PC-3 (cell line): ENCODE measurements at regions of chr20 and their contacts with region 1.

Region 1: DNA sequence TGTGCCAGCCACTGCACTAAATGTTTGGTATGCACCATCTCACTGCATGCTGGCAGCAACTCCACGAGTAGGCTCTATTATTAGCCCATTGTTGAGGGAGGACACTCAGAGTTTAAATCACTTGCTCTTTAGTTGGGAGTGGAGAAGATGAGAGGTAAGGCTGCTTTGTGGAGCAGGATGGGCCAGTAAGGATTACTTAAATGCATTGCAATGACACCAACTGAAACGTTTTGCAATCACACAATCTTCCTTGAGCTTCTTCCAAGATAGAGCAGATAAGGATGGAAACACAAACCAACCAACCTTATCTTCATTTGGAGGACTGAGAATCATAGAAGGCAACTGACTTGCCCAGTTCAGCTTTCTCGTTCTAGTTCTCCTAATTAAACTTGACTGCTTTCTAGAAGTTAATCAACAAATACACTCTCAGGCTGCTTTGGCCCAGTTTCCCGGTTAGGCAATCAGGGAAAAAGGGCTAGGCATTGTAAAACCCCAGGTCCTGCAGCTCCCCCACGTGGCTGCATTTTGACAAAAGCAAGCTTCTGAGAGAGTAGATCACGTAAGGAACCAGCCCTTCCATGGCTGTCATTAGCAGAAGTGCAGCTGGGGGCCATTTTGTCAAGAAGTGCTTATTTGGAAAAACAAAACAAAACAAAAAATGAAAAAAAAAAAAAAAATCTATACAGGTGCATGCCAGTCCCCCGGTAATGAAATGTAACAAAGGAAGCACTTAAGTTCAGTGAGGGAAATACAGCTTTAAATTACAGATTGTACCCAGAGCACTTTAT is 130.6 kb downstream of the BCAS1 start:
- DNase-seq: peak; percentile 100
- ATAC-seq: peak; percentile 84
- H3K4me3 ChIP-seq: no peak overlapping the region
- H3K27ac ChIP-seq: peak overlapping the region; percentile 70
- H3K4me1 ChIP-seq: peaks cover 43% of the 10 kb centered on the region
- H3K27me3 ChIP-seq: no peaks in the 10 kb centered on the region
- CTCF ChIP-seq: peak; percentile 99

Region 2: DNA sequence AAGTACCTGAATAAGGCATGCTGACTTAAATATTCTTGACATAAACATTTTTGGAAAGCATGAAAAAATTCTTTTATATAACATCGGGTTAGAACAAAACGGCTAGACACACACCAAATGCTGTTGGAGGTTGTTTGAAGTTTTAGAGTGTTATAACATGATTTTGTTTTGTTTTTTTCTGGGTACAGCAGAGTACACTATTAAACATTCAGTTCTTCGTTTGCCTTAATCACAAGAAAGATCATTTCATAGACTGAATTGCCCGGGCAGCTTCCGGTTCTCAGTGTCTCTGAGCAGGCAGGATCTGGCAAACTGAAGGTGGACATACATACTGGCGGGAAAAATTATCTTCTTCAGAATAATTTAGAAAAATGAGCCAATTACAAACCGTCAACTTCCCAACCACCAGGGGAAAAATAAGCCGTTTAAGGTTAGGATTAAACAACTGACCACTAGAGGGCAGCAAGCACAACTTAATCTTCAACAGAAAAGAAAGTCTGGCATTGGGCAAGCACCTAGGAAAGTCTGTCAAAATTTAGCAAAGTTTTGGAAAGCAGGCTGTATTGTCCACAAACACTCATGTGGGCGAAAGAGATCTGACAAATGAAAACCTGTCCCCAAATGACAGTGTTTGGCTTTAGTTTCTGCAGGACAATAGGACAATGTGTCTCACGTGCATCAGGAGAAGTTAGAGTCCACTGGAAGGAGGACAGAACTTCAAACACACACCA is 361.1 kb before region 1 on chr20:
- CTCF ChIA-PET with region 1: interaction called, 5 read pairs
- POLR2A ChIA-PET with region 1: interaction called, 4 read pairs
- intact Hi-C with region 1: loop called (anchors 1 kb)
- DNase-seq: peak; percentile 100
- ATAC-seq: peak; percentile 12
- H3K4me3 ChIP-seq: peak overlapping the region; percentile 75
- H3K27ac ChIP-seq: peak overlapping the region; percentile 88
- H3K4me1 ChIP-seq: peaks cover 59% of the 10 kb centered on the region
- H3K27me3 ChIP-seq: no peaks in the 10 kb centered on the region
- CTCF ChIP-seq: peak; percentile 99

Region 3: GRCh38 chr20:53643031-53643832 is 296.5 kb before region 1 on chr20:
- CTCF ChIA-PET with region 1: interaction called, 3 read pairs
- POLR2A ChIA-PET with region 1: no interaction called
- intact Hi-C with region 1: loop called (anchors 2 kb)
- DNase-seq: peak; percentile 94
- ATAC-seq: peak; percentile 92
- H3K4me3 ChIP-seq: peak overlapping the region; percentile 51
- H3K27ac ChIP-seq: peak overlapping the region; percentile 80
- H3K4me1 ChIP-seq: peaks cover 32% of the 10 kb centered on the region
- H3K27me3 ChIP-seq: no peaks in the 10 kb centered on the region
- CTCF ChIP-seq: no peak

Region 4: GRCh38 chr20:53869466-53870258 is 70.1 kb before region 1 on chr20:
- CTCF ChIA-PET with region 1: interaction called, 4 read pairs
- POLR2A ChIA-PET with region 1: no interaction called
- intact Hi-C with region 1: loop called (anchors 2 kb)
- DNase-seq: peak; percentile 98
- ATAC-seq: peak; percentile 71
- H3K4me3 ChIP-seq: peak overlapping the region; percentile 3; the same call in 1 of the 2 replicates
- H3K27ac ChIP-seq: peak overlapping the region; percentile 87
- H3K4me1 ChIP-seq: peaks cover 73% of the 10 kb centered on the region
- H3K27me3 ChIP-seq: no peaks in the 10 kb centered on the region
- CTCF ChIP-seq: peak; percentile 99

Region 5: DNA sequence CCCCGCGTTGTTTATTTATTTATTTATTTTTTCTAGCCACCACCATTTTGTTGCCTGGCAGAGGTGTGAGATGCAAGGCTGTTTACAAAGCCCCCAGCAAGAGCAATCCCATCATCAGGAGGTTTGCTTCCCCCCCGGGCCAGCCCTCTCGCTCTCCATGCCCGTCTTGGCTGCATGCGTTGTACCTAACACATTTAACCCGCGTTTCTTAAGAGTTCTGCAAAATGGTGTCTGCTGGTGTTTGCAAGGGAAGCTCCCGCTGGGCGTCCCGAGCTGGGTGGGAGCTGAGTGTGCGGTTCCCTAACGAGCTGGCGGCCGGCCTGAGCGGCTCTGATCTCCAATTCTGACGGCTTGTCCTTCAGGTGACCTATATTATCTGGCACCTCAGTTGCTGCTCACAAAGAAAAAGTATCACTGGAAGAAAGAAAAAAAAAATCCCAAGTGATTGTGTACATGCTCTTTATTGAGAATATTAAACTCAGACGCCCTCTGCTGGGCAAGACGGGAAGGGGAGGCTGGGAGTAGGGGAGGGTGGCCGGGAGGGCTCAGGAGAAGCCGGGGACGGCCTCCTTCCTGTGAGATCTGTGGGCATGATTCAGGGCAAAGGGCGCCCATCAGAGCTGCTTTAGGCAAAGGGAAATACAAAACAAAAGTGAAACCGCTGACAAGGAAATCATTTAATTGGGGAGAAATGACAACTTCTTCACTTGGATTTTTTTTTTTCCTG is 24.2 kb before region 1 on chr20:
- CTCF ChIA-PET with region 1: interaction called, 17 read pairs
- POLR2A ChIA-PET with region 1: interaction called, 3 read pairs
- intact Hi-C with region 1: loop called (anchors 1 kb)
- DNase-seq: peak; percentile 100
- ATAC-seq: peak; percentile 88
- H3K4me3 ChIP-seq: peak overlapping the region; percentile 72
- H3K27ac ChIP-seq: peak overlapping the region; percentile 84
- H3K4me1 ChIP-seq: peaks cover 48% of the 10 kb centered on the region
- H3K27me3 ChIP-seq: no peaks in the 10 kb centered on the region
- CTCF ChIP-seq: peak; percentile 99

Region 6: DNA sequence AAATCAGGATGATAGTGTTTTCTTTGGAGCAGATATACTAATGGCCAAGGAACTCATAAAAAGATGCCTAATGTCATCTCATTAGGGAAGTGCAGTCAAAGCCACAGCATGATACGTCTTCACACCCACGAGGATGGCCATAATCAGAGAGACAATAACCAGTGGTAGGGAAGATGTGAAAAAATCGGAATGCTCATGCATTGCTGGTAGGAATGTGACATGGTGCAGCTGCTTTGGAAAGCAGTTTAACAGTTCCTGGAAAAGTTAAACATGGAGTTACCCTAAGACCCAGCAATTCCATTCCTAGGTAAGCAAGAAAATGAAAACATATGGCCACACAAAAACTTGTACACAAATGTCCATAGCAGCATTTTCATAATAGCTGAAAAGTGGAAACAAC is 100.8 kb after region 1 on chr20:
- CTCF ChIA-PET with region 1: no interaction called
- POLR2A ChIA-PET with region 1: no interaction called
- intact Hi-C with region 1: no loop called
- DNase-seq: no peak
- ATAC-seq: no peak
- H3K4me3 ChIP-seq: no peak overlapping the region
- H3K27ac ChIP-seq: no peak overlapping the region
- H3K4me1 ChIP-seq: no peaks in the 10 kb centered on the region
- H3K27me3 ChIP-seq: peaks cover 51% of the 10 kb centered on the region
- CTCF ChIP-seq: no peak

Region 7: GRCh38 chr20:54062812-54063280 is 123.1 kb after region 1 on chr20:
- CTCF ChIA-PET with region 1: no interaction called
- POLR2A ChIA-PET with region 1: no interaction called
- intact Hi-C with region 1: loop called (anchors 1 kb)
- DNase-seq: peak; percentile 79
- ATAC-seq: peak; percentile 49
- H3K4me3 ChIP-seq: no peak overlapping the region
- H3K27ac ChIP-seq: no peak overlapping the region
- H3K4me1 ChIP-seq: peaks cover 15% of the 10 kb centered on the region
- H3K27me3 ChIP-seq: no peaks in the 10 kb centered on the region
- CTCF ChIP-seq: peak; percentile 95